Endothelial cell of umbilical vein (primary cell): ENCODE measurements at regions of chr1 and their contacts with region 1.

Region 1: DNA sequence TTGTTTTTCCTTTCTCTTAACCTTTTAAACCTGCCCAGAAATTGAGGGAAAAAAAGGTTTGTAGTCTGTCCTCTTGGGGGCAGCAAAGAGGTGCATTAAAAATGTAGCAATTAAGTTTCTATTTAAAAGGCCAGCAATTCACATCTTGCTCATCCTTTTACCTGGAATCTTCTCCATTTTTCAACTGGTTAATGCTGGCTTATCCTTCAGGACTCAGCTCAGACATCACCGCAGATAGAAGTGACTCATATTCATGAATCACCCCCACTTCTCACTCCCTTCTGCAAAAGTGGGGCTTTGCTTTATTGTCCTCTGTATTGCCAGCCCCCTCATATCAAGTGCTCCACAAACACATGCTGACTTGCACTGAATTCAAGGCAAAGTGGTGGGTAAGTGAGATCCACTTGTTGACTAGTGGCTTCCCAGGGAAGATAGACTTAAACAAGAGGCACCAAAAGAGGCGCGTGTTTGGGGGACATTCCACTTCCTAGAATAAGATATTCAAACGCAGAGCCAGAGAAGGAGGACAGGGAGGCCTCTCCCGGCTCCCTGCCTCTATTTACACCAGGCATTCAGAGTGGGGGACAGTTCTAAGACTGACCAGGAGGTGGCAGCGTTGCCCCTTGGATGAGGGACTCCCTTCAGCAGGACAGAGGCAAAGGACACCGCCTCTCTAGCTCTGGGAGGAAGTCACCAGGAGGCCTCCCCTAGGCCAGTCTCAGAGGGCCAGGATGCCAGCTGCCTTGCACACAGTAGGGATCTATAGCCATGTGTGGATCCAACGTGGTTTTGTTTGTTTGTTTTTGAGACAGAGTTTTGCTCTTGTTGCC is 23.2 kb upstream of the ZNF648 start:
- DNase-seq: peak; percentile 56
- H3K4me3 ChIP-seq: no peak overlapping the region
- H3K27ac ChIP-seq: no peak overlapping the region
- H3K4me1 ChIP-seq: peaks cover 2% of the 10 kb centered on the region
- H3K27me3 ChIP-seq: no peaks in the 10 kb centered on the region
- CTCF ChIP-seq: peak; percentile 55 to 70
- POLR2A ChIP-seq: no peak

Region 2: GRCh38 chr1:181479137-181479745 is 605.5 kb before region 1 on chr1:
- CTCF ChIA-PET with region 1: interaction called, 180 read pairs
- POLR2A ChIA-PET with region 1: no interaction called
- dilution Hi-C with region 1: no loop called
- intact Hi-C with region 1: loop called (anchors 1 kb)
- DNase-seq: peak; percentile 49
- H3K4me3 ChIP-seq: no peak overlapping the region
- H3K27ac ChIP-seq: no peak overlapping the region
- H3K4me1 ChIP-seq: no peaks in the 10 kb centered on the region
- H3K27me3 ChIP-seq: peaks cover 21 to 30% of the 10 kb centered on the region in 2 experiments
- CTCF ChIP-seq: peak; percentile 60 to 61
- POLR2A ChIP-seq: no peak

Region 3: GRCh38 chr1:181712711-181713110 is 372.0 kb before region 1 on chr1:
- CTCF ChIA-PET with region 1: no interaction called
- POLR2A ChIA-PET with region 1: no interaction called
- dilution Hi-C with region 1: no loop called
- intact Hi-C with region 1: no loop called
- DNase-seq: no peak
- H3K4me3 ChIP-seq: no peak overlapping the region
- H3K27ac ChIP-seq: no peak overlapping the region
- H3K4me1 ChIP-seq: no peaks in the 10 kb centered on the region
- H3K27me3 ChIP-seq: no peaks in the 10 kb centered on the region
- CTCF ChIP-seq: no peak
- POLR2A ChIP-seq: no peak

Region 4: DNA sequence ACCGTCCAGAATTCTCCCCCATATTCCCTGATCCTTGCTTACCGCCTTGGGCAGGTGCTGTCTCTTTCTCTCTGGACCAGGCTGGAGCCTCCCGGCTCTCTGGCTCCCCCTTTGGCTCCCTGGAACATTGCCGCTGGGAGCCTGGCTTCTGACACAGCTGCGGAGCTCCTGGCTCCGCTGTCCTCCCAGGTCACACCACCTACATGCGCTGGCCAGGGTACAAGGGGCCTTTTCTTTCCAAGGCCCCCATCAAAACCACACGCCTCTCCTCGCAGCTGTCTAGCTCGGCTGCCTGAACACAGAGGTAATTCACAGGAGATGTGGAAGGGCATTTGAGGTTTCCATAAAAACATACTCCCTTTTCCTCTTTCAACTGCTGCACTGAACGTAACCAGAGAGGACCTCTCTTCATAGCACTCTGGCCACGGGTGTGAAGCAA is 15.7 kb before region 1 on chr1:
- CTCF ChIA-PET with region 1: interaction called, 35 read pairs
- POLR2A ChIA-PET with region 1: no interaction called
- dilution Hi-C with region 1: no loop called
- intact Hi-C with region 1: no loop called
- DNase-seq: peak; percentile 26
- H3K4me3 ChIP-seq: no peak overlapping the region
- H3K27ac ChIP-seq: no peak overlapping the region
- H3K4me1 ChIP-seq: no peaks in the 10 kb centered on the region
- H3K27me3 ChIP-seq: no peaks in the 10 kb centered on the region
- CTCF ChIP-seq: peak; percentile 47 to 85
- POLR2A ChIP-seq: no peak

Region 5: GRCh38 chr1:182391362-182392044 is 306.8 kb after region 1 on chr1 and contains the start of gene GLUL:
- CTCF ChIA-PET with region 1: interaction called, 51 read pairs
- POLR2A ChIA-PET with region 1: no interaction called
- dilution Hi-C with region 1: no loop called
- intact Hi-C with region 1: loop called (anchors 1 kb)
- DNase-seq: peak; percentile 94
- H3K4me3 ChIP-seq: peak within 1 kb of the TSS; percentile 70 to 90 (median 76)
- H3K27ac ChIP-seq: peak within 1 kb of the TSS; percentile 81
- H3K4me1 ChIP-seq: peaks cover 4% of the 10 kb centered on the region
- H3K27me3 ChIP-seq: no peaks in the 10 kb centered on the region
- CTCF ChIP-seq: peak in 1 of 2 donors; percentile 33
- POLR2A ChIP-seq: peak; percentile 99
- total RNA-seq, gene GLUL: 181 and 187 TPM in 2 replicates

Region 6: DNA sequence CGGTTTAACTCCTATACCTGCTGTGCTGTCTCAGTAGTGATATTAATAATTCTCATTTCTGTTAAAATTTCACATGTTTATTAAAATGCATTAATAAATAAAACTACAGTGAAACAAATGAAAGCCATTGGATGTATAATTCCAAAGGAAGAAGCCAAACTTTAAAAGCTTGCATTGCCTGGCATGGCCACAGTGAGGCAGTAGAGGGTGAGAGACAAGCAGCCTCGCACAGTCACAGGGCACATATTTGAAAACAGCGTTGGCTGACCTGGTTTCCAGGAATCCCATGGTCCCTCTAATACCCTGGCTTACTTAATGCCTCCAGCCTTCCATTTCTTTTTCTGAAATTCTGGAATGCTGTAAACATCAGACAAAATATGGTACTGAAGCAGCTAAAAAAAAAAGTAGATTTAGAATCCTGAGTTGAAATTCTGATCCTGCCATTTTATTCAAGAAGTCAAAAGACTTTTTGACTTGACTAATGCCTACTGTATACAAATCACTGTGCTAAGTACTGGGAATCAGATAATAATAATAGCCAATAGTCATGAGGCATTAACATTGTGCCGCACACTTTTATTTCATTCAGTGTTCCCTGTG is 511.0 kb after region 1 on chr1:
- CTCF ChIA-PET with region 1: interaction called, 10 read pairs
- POLR2A ChIA-PET with region 1: no interaction called
- dilution Hi-C with region 1: no loop called
- intact Hi-C with region 1: loop called (anchors 5 kb)
- DNase-seq: peak; percentile 60
- H3K4me3 ChIP-seq: no peak overlapping the region
- H3K27ac ChIP-seq: no peak overlapping the region
- H3K4me1 ChIP-seq: no peaks in the 10 kb centered on the region
- H3K27me3 ChIP-seq: peaks cover 4 to 13% of the 10 kb centered on the region in 2 experiments
- CTCF ChIP-seq: peak; percentile 85 to 88
- POLR2A ChIP-seq: no peak